ENCODE measurements at regions of chr11 and their contacts with region 1.

Region 1: DNA sequence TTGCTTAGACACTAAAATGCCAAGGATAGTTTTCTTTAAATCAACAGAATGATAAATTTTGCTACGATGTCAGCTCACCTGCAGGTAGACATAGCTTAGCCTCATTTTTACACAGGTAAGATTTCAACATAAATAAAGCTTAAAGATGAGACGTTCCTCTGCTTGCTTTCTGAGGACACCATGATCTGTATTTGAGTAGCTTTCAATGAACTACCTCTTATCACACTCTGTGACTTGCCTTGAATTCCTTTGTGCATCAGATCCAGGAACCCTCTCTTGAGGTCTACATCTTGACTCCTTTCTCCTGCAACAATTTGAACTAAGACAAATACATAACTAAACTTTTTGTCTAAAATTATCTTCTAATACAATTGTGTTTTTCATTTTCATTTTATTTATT is 26.1 kb upstream of the OR8I2 start:
- ATAC-seq: no peak
- H3K4me3 ChIP-seq: no peak overlapping the region
- H3K27ac ChIP-seq: no peak overlapping the region
- H3K4me1 ChIP-seq: no peaks in the 10 kb centered on the region

Region 2: DNA sequence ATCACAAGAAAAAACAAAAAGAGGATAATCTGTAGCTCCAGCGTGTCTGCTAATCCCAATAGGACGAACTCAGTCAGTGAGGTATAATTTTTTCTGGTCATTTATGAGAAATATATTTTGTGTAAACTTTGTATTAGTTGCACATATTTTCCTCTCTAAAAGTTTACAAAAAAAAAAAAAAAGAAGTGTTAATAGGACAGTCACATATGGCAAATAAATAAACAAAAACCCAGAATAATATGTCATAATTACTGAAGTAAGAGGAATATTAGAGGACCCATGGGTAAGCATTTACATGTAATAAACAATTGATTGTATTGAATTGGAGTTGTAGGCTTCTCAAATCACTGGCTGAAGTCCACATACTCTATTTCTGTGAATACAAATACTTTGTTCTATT is 72.5 kb before region 1 on chr11 and contains the start of gene OR5F1:
- in situ Hi-C with region 1: no loop called
- ATAC-seq: no peak
- H3K4me3 ChIP-seq: no peak within 1 kb of the TSS
- H3K27ac ChIP-seq: no peak within 1 kb of the TSS
- H3K4me1 ChIP-seq: no peaks in the 10 kb centered on the region
- total RNA-seq, gene OR5F1: 0.36 to 0.95 TPM in 2 of 8 experiments, not detected in the others

Region 3: GRCh38 chr11:56013805-56014204 is 53.2 kb before region 1 on chr11:
- in situ Hi-C with region 1: no loop called
- ATAC-seq: no peak
- H3K4me3 ChIP-seq: no peak overlapping the region
- H3K27ac ChIP-seq: no peak overlapping the region
- H3K4me1 ChIP-seq: no peaks in the 10 kb centered on the region

Region 4: DNA sequence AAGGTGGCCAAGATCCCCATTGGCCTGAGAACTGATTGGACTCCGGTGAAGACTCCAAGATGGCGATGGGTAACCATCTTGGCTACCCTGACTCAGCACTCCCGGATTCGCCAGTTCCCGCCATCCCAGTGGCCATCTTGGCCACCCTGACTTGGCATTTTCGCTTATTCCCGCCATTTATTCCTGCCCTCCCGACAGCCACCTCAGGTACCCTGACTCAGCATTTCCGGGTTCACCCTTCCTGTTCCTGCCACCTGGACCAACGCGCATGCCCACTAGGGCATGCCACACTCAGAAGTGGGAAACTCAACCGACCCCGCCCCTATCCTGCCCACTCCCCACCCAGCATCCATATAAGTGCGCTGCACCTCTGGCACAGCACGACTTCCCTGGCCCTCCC is 85.4 kb after region 1 on chr11:
- in situ Hi-C with region 1: loop called in 1 of 9 experiments (anchors 25 kb)
- ATAC-seq: no peak
- H3K4me3 ChIP-seq: no peak overlapping the region
- H3K27ac ChIP-seq: no peak overlapping the region
- H3K4me1 ChIP-seq: no peaks in the 10 kb centered on the region

Region 5: DNA sequence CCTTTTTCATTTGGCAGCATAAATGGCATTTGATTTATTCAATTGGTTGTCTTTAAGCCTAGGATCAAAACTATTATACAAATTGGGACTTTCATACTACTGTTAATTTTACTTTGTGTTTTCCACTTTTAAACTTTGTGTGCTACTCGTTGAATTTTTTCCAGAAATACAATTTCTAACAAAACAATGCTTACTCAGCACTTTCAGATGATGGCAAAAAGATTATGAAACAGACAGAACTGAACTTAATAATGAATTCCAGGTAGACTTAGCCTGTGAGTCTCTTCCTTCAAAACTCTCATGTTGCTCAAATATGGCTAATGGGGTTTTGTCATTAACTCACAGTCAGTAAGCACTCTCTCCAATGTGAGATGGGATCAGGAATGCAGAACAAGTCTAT is 140.8 kb after region 1 on chr11:
- in situ Hi-C with region 1: no loop called
- ATAC-seq: no peak
- H3K4me3 ChIP-seq: no peak overlapping the region
- H3K27ac ChIP-seq: no peak overlapping the region
- H3K4me1 ChIP-seq: no peaks in the 10 kb centered on the region

Region 6: DNA sequence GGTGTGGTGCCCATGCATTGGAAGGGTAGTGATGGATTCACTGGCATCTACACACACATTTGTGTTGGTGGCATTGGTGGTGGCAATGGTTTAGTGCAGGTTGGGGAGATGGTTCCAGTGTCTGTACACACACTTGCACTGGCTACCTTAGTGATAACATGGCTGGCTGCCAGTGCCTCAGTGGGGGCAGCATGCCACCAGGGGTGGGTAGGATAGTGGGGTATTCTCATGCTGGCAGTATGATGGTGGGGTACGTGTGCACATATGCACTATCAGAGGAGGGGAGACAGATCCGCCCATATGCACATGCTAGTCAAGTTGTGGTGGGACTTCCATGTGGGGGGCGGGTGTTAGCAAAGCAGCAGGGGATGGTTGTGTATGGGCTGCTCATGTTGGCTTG is 240.9 kb after region 1 on chr11:
- in situ Hi-C with region 1: no loop called
- ATAC-seq: no peak
- H3K4me3 ChIP-seq: no peak overlapping the region
- H3K27ac ChIP-seq: no peak overlapping the region
- H3K4me1 ChIP-seq: no peaks in the 10 kb centered on the region